Sigmoid colon (tissue), 7 donors: ENCODE measurements at regions of chr2 and their contacts with region 1.

Region 1: DNA sequence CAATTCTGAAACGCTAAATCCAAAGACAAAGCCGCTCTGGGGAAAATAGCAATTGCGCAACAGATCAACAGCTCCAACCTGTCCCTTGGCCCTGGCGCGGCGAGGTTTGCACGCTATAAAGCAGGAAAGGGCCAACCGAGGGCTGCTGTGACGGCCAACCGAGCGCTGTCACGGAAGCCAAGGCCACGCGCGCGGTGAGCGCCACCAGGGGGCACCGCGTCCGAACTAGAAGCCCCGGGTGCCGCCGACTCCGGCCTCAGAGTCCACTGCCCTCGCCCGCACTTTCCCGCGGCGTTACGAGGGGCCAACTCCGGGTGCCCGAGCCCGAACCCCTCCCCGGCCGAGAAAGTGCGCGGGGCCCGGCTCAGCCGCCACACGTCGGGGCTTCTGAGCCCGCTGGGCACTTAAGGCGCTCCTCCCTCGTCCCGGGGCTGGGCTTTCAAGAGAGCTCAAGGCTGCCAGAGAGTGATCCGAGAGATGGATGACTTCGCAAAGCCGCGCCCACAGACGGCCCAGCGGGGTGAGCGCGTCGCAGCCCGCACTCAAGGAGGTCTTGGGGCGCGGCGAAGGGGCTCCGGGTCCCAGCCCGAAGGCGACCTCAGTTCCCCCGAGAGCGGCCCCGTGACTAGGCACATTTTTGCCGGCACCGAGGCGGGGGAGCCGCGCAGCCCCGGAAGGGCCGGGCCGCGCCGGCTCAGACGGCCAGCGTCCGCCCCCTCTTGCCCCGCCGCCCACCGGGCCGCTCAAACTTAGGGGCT is 897 bp downstream of the NFE2L2 start:
- DNase-seq: peak; percentile 99
- H3K4me3 ChIP-seq: peak overlapping the region; percentile 86 to 99 (median 99)
- H3K27ac ChIP-seq: peak overlapping the region; percentile 90 to 100 (median 100)
- H3K4me1 ChIP-seq: peaks cover 0 to 48% (median 45%) of the 10 kb centered on the region in 4 donors
- H3K27me3 ChIP-seq: no peaks in the 10 kb centered on the region
- CTCF ChIP-seq: peak; percentile 88 to 91 (median 90)
- EP300 ChIP-seq: peak in 2 of 4 donors; percentile 71 to 88
- POLR2A ChIP-seq: peak; percentile 53 to 54

Region 2: GRCh38 chr2:177212106-177212890 is 51.3 kb before region 1 on chr2 and contains the start of gene HNRNPA3:
- intact Hi-C with region 1: loop called (anchors 1 kb)
- DNase-seq: peak; percentile 100
- H3K4me3 ChIP-seq: peak within 1 kb of the TSS; percentile 77 to 98 (median 87)
- H3K27ac ChIP-seq: peak within 1 kb of the TSS; percentile 99 to 100 (median 100)
- H3K4me1 ChIP-seq: peaks cover 0 to 52% (median 44%) of the 10 kb centered on the region in 4 donors
- H3K27me3 ChIP-seq: no peaks in the 10 kb centered on the region
- CTCF ChIP-seq: peak in 2 of 4 experiments; percentile 22 to 27
- EP300 ChIP-seq: peak; percentile 1 to 59 (median 25)
- POLR2A ChIP-seq: peak; percentile 95
- total RNA-seq, gene HNRNPA3: 69.2 to 82.1 (median 74.5) TPM

Region 3: DNA sequence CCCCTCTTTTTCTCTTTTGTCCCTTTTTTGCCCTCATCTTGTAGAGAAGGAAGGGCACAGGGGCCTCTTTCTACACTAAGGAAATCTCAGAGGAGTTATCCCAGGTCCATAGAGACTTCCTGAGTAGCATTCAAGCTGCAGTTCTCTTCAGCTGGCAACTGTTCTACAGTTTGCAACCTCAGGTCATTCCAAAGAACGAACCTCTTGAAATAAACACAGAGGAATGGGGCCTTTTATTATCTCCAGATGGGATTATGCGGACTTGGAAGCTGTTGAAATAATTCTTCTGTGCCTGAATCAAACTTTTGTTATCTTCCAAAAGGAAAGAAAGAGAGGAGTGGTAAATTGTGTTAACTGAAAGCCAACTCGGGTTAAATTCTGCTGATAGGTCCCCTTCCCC is 31.9 kb after region 1 on chr2:
- intact Hi-C with region 1: loop called (anchors 2 kb)
- DNase-seq: no peak
- H3K4me3 ChIP-seq: peak overlapping the region in 2 of 4 donors; percentile 1 to 4
- H3K27ac ChIP-seq: peak overlapping the region; percentile 53 to 73 (median 70)
- H3K4me1 ChIP-seq: peaks cover 0 to 14% (median 10%) of the 10 kb centered on the region in 4 donors
- H3K27me3 ChIP-seq: no peaks in the 10 kb centered on the region
- CTCF ChIP-seq: no peak
- EP300 ChIP-seq: no peak
- POLR2A ChIP-seq: no peak

Region 4: DNA sequence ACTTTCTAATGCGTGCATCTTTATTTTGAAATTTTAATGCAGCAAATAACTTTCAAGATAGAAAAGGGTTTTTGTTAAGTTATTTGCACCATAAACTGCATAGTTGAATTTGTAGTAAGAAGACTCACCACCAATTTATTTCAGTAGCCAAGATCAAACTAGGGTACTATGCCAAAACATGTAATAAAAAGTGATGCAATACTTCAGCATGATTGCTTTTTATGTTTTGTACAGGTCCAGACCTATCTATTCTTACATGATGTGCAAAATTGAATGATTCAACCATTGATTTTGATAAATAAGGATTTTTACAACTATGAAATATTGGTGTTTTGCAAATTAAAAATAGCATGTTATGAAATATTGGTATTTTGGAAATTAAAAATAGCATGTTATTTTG is 155.6 kb after region 1 on chr2:
- intact Hi-C with region 1: loop called (anchors 5 kb)
- DNase-seq: no peak
- H3K4me3 ChIP-seq: no peak overlapping the region
- H3K27ac ChIP-seq: no peak overlapping the region
- H3K4me1 ChIP-seq: peaks cover 0 to 54% (median 27%) of the 10 kb centered on the region in 4 donors
- H3K27me3 ChIP-seq: no peaks in the 10 kb centered on the region
- CTCF ChIP-seq: no peak
- EP300 ChIP-seq: no peak
- POLR2A ChIP-seq: no peak